ENCODE measurements at regions of chr10 and their contacts with region 1.

Region 1: DNA sequence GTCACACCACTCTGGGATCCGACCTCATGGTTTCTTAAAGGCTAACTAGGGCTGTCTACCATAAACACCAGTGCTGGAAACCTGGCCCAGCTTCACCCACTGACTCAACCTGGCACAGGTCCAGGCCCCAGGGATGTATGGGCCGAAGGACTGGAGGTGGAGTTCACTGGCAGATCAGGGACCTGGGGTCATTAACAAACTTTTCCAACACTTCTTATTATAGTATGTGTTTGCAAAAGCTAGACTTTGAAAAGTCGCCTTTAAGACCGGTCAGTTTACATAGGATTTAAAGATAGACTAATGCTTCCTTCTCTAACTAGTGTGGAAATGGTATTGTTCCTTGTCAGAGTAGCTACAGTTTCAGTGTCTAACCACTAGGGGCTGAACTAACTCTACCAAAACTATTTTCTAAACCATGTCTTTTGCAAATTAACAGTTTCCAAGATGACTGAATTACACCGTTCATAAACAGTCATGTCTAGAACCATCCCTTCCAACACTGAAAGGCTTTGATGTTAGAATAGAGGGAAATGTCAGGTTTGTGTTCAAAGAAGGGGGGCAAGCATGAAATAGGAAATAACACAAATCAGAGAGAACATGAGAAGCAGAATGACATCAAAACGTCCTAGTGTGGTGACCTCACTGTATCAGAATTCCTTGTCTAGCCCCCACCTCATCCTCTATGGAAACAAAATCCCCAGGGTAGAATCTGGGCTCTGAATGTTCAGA is 29.7 kb downstream of the STN1 start:
- DNase-seq: peak; percentile 65
- ATAC-seq: peak; percentile 76
- H3K4me3 ChIP-seq: no peak overlapping the region
- H3K4me3 Mint-ChIP-seq: no peak overlapping the region
- H3K27ac ChIP-seq: no peak overlapping the region
- H3K27ac Mint-ChIP-seq: no peak overlapping the region
- H3K4me1 ChIP-seq: no peaks in the 10 kb centered on the region
- H3K4me1 Mint-ChIP-seq: no peaks in the 10 kb centered on the region
- H3K27me3 ChIP-seq: no peaks in the 10 kb centered on the region
- H3K27me3 Mint-ChIP-seq: no peaks in the 10 kb centered on the region
- CTCF ChIP-seq: peak; percentile 88

Region 2: GRCh38 chr10:103712570-103713498 is 175.4 kb before region 1 on chr10:
- CTCF ChIA-PET with region 1: interaction called, 34 read pairs
- POLR2A ChIA-PET with region 1: no interaction called
- intact Hi-C with region 1: no loop called
- DNase-seq: peak; percentile 84
- ATAC-seq: peak; percentile 92
- H3K4me3 ChIP-seq: no peak overlapping the region
- H3K4me3 Mint-ChIP-seq: no peak overlapping the region
- H3K27ac ChIP-seq: no peak overlapping the region
- H3K27ac Mint-ChIP-seq: no peak overlapping the region
- H3K4me1 ChIP-seq: no peaks in the 10 kb centered on the region
- H3K4me1 Mint-ChIP-seq: no peaks in the 10 kb centered on the region
- H3K27me3 ChIP-seq: no peaks in the 10 kb centered on the region
- H3K27me3 Mint-ChIP-seq: peaks cover 6% of the 10 kb centered on the region
- CTCF ChIP-seq: peak; percentile 94

Region 3: GRCh38 chr10:103911021-103911459 is 22.8 kb after region 1 on chr10:
- CTCF ChIA-PET with region 1: interaction called, 14 read pairs
- POLR2A ChIA-PET with region 1: no interaction called
- intact Hi-C with region 1: no loop called
- DNase-seq: peak; percentile 46
- ATAC-seq: peak; percentile 55
- H3K4me3 ChIP-seq: peak overlapping the region in 3 of 5 experiments; percentile 6 to 30 (median 8)
- H3K4me3 Mint-ChIP-seq: peak overlapping the region; percentile 44
- H3K27ac ChIP-seq: peak overlapping the region; percentile 63 to 79
- H3K27ac Mint-ChIP-seq: peak overlapping the region; percentile 88
- H3K4me1 ChIP-seq: peaks cover 37 to 41% of the 10 kb centered on the region in 2 donors
- H3K4me1 Mint-ChIP-seq: peaks cover 43% of the 10 kb centered on the region
- H3K27me3 ChIP-seq: no peaks in the 10 kb centered on the region
- H3K27me3 Mint-ChIP-seq: no peaks in the 10 kb centered on the region
- CTCF ChIP-seq: no peak

Region 4: GRCh38 chr10:103983367-103983911 is 95.2 kb after region 1 on chr10:
- CTCF ChIA-PET with region 1: interaction called, 6 read pairs
- POLR2A ChIA-PET with region 1: interaction called, 5 read pairs
- intact Hi-C with region 1: loop called (anchors 5 kb)
- DNase-seq: peak; percentile 51
- ATAC-seq: peak; percentile 80
- H3K4me3 ChIP-seq: peak overlapping the region in 3 of 5 experiments; percentile 1 to 11 (median 1)
- H3K4me3 Mint-ChIP-seq: peak overlapping the region; percentile 24
- H3K27ac ChIP-seq: peak overlapping the region; percentile 36 to 66
- H3K27ac Mint-ChIP-seq: peak overlapping the region; percentile 83
- H3K4me1 ChIP-seq: peaks cover 11 to 22% of the 10 kb centered on the region in 2 donors
- H3K4me1 Mint-ChIP-seq: peaks cover 46% of the 10 kb centered on the region
- H3K27me3 ChIP-seq: no peaks in the 10 kb centered on the region
- H3K27me3 Mint-ChIP-seq: no peaks in the 10 kb centered on the region
- CTCF ChIP-seq: no peak

Region 5: DNA sequence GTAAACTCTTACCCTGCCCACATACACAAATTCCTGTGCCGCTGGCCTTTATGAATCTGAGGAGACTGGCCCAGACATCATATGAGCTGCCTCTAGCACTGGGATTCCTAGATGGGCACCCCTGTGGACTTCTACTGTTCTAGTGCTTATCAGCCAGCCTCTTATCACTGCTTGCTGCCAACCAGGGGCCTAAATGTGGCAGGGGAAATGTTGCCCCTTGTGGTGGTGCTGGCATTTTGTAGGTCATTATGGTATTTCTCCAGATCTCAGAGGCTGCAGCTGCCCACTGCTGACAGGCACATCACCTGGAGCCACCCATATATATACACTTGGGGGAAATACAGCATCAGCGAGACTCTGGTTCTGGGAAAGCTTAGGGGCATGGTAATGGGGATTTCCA is 239.1 kb after region 1 on chr10:
- CTCF ChIA-PET with region 1: interaction called, 10 read pairs
- POLR2A ChIA-PET with region 1: no interaction called
- intact Hi-C with region 1: no loop called
- DNase-seq: peak; percentile 48
- ATAC-seq: no peak
- H3K4me3 ChIP-seq: no peak overlapping the region
- H3K4me3 Mint-ChIP-seq: no peak overlapping the region
- H3K27ac ChIP-seq: no peak overlapping the region
- H3K27ac Mint-ChIP-seq: no peak overlapping the region
- H3K4me1 ChIP-seq: peaks cover 3 to 4% of the 10 kb centered on the region in 2 donors
- H3K4me1 Mint-ChIP-seq: peaks cover 6% of the 10 kb centered on the region
- H3K27me3 ChIP-seq: no peaks in the 10 kb centered on the region
- H3K27me3 Mint-ChIP-seq: no peaks in the 10 kb centered on the region
- CTCF ChIP-seq: peak; percentile 43

Region 6: GRCh38 chr10:104274762-104275721 is 386.8 kb after region 1 on chr10:
- CTCF ChIA-PET with region 1: interaction called, 22 read pairs
- POLR2A ChIA-PET with region 1: no interaction called
- intact Hi-C with region 1: no loop called
- DNase-seq: peak; percentile 64
- ATAC-seq: peak; percentile 71
- H3K4me3 ChIP-seq: no peak overlapping the region
- H3K4me3 Mint-ChIP-seq: no peak overlapping the region
- H3K27ac ChIP-seq: no peak overlapping the region
- H3K27ac Mint-ChIP-seq: no peak overlapping the region
- H3K4me1 ChIP-seq: peaks cover 8 to 9% of the 10 kb centered on the region in 2 donors
- H3K4me1 Mint-ChIP-seq: peaks cover 4% of the 10 kb centered on the region
- H3K27me3 ChIP-seq: peaks cover 0 to 23% (median 14%) of the 10 kb centered on the region in 4 experiments
- H3K27me3 Mint-ChIP-seq: peaks cover 23% of the 10 kb centered on the region
- CTCF ChIP-seq: peak; percentile 86